ENCODE measurements at regions of chr1 and their contacts with region 1.

Region 1: DNA sequence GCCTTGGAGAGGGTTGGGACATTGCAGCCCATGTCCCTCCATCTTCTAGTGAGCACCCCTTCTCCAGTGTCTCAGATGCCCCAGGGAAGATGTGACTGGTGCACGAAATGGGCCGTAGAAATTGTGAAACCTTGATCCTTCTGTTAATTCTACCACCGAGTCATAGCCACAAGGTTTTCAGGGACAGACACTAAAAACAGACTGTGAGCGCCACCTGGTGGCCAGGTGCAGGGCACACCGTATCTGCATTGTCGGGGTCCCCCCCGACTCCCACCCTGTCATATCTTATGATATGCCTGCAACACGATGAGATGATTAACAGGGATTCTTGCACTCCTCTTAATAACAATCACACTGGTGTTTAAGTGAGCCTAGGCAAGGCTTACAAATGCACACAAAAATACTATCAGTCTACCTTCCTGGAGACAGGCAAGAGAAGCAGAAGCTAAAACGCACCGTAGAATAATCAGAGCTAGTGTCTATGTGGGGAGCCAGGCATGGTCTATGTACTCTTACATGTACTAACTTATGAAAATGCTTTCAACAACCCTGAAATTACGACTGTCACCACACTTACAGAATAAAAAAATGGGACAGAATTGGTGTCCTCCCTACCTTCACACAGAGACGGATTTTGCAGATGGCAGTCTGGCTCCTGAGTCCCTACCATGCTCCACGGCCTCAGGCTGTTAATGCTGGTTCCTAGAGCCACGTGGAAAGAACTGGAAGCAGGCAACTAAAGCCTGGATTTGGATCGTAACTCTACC is 57.9 kb downstream of the FHAD1 start:
- DNase-seq: no peak
- ATAC-seq: no peak
- H3K4me3 ChIP-seq: no peak overlapping the region
- H3K27ac ChIP-seq: no peak overlapping the region
- H3K4me1 ChIP-seq: no peaks in the 10 kb centered on the region
- H3K27me3 ChIP-seq: no peaks in the 10 kb centered on the region
- CTCF ChIP-seq: peak; percentile 28 to 70 (median 62)
- POLR2A ChIP-seq: no peak

Region 2: GRCh38 chr1:15128520-15129313 is 176.2 kb before region 1 on chr1:
- in situ Hi-C with region 1: loop called in 3 of 4 experiments (anchors 5 to 10 kb)
- intact Hi-C with region 1: loop called (anchors 2 kb)
- DNase-seq: peak; percentile 11 to 17
- ATAC-seq: peak in 1 of 2 donors; percentile 53
- H3K4me3 ChIP-seq: no peak overlapping the region
- H3K27ac ChIP-seq: no peak overlapping the region
- H3K4me1 ChIP-seq: no peaks in the 10 kb centered on the region
- H3K27me3 ChIP-seq: no peaks in the 10 kb centered on the region
- CTCF ChIP-seq: peak; percentile 19 to 73 (median 58)
- POLR2A ChIP-seq: no peak

Region 3: DNA sequence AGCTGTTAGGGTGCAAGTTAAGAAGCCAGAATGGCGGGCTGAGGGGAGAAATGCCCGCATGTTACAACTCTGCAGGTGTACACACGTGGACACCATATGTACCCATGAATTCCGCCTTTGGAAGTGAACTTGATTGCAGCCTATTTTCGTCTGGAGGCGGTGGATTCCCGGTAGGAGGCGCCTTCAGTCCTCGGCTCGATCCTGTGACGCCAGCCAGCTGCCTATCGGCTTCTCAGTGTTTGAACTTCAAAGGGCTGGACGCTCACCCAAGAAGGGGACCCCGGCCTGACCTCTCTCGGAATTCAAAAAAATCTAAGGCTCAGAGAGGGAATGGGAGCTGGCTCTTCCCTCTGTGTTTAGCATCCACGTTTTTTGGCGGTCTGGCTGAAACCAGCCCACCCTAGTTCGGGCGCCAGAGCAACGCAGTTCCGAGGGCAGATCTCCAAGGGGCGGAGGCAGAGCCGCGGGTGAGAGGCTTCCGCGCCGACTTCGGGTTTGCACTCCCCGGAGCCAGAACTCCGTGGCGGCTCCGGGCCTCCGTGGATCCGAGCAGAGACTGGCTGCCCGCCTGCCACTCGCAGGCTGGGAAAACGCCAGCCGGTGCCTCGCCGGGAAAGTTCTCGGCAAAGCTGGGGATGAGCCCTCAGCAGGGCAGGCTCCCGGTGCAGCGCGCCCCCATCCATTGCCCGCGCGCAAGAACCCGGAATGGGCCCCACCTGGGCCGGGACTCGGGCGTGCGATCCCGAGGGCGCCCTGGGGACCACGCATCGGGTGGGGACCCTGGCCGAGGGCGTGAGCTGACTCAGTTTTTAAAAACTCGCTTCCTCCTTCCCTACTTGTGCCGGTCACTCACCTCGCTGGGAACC is 152.3 kb before region 1 on chr1:
- in situ Hi-C with region 1: no loop called
- intact Hi-C with region 1: loop called (anchors 10 kb)
- DNase-seq: peak; percentile 21 to 31
- ATAC-seq: peak in 1 of 2 donors; percentile 30
- H3K4me3 ChIP-seq: peak overlapping the region; percentile 56 to 60 (median 58)
- H3K27ac ChIP-seq: peak overlapping the region; percentile 33 to 51 (median 40)
- H3K4me1 ChIP-seq: peaks cover 0 to 14% of the 10 kb centered on the region in 2 donors
- H3K27me3 ChIP-seq: peaks cover 7 to 29% (median 22%) of the 10 kb centered on the region in 3 donors
- CTCF ChIP-seq: peak in 4 of 5 experiments; percentile 22 to 49 (median 36)
- POLR2A ChIP-seq: peak in 1 of 2 donors; percentile 35

Measured in gastrocnemius medialis (tissue), 4 donors.